HCT116 (cell line): ENCODE measurements at regions of chr14 and their contacts with region 1.

Region 1: GRCh38 chr14:63624203-63624602 is 17.5 kb downstream of the WDR89 start:
- DNase-seq: no peak
- ATAC-seq: no peak
- H3K4me3 ChIP-seq: no peak overlapping the region
- H3K27ac ChIP-seq: no peak overlapping the region
- H3K4me1 ChIP-seq: no peaks in the 10 kb centered on the region
- H3K27me3 ChIP-seq: no peaks in the 10 kb centered on the region
- CTCF ChIP-seq: no peak
- POLR2A ChIP-seq: no peak
- RAD21 ChIP-seq: no peak

Region 2: DNA sequence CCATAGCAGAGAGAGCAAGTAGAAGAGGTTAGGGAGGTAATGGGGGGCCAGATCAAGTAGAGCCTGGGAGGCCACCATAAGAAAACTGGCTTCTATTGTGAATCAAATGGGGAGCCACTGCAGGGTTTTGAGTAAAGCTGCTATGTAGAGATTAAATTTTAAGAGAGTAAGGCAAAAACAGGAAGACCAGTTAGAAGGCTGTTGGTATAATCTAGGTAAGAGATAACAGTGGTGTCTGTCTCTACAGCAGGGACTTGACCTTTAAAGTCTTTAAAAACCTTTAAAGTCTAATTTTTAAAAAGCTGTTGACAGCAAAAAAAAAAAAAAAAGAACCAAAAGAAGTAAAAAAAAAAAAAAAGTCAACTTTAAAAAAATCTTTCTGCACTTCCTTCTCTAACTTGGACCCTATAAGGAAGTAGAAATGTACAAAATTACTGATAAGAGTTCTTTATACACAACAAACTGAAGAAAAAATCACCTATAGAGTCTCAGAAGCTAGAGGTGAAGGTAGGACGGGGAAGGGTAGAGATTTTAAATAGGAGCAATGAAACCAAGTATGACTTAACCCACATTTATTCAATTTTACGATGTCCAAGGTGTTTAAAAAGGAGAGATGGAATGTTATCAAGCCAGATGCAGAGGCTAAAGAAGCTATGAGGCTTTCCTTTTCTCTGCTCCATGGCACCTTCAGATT is 77.5 kb after region 1 on chr14:
- CTCF ChIA-PET with region 1: no interaction called
- POLR2A ChIA-PET with region 1: no interaction called
- RAD21 ChIA-PET with region 1: no interaction called
- intact Hi-C with region 1: loop called (anchors 1 kb)
- DNase-seq: no peak
- ATAC-seq: no peak
- H3K4me3 ChIP-seq: no peak overlapping the region
- H3K27ac ChIP-seq: no peak overlapping the region
- H3K4me1 ChIP-seq: no peaks in the 10 kb centered on the region
- H3K27me3 ChIP-seq: no peaks in the 10 kb centered on the region
- CTCF ChIP-seq: no peak
- POLR2A ChIP-seq: no peak
- RAD21 ChIP-seq: no peak